ENCODE measurements at regions of chr15 and their contacts with region 1.

Region 1: DNA sequence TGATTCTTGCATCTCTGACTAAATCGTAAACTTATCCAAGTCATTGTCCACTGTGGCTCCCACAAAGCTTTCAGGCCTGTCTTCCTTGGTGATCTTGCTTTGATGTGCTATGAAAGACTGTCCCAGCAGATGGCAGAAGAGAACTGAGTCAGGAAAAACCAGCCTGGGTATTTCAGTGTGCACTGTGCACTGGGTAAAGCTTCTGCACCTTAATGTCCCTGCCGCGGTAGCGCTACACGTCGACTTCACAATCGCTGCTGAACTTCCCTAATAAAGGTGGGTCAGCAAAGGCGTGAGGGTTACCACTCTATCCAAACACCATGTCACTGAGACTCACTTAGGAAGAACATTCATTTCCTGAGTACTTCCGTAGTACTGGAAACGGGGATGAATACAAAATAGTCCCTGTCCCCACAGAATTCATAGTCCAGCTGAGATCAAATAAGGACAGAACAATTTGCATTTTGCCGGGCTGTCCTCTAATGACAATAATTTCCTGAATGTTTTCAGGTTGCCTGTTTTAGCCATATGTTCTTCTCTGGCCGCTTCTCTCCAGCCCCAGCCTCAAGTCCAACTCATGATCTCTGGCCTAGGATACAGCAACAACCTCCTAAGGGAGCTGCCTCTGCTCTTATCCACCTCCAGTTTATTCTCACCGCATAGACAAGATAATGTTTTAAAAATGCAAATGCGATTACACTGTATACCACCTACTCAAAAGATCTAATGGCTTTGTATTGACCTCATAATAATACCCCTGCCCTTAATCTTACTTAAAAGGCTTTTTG is 83.6 kb upstream of the AKAP13 start:
- DNase-seq: no peak
- H3K4me3 ChIP-seq: peak overlapping the region; percentile 35 to 52 (median 38)
- H3K27ac ChIP-seq: peak overlapping the region in 2 of 4 donors; percentile 33 to 66
- H3K4me1 ChIP-seq: peaks cover 5 to 14% (median 10%) of the 10 kb centered on the region in 4 donors
- H3K27me3 ChIP-seq: no peaks in the 10 kb centered on the region
- CTCF ChIP-seq: peak; percentile 70 to 81 (median 80)
- EP300 ChIP-seq: no peak
- POLR2A ChIP-seq: no peak

Region 2: DNA sequence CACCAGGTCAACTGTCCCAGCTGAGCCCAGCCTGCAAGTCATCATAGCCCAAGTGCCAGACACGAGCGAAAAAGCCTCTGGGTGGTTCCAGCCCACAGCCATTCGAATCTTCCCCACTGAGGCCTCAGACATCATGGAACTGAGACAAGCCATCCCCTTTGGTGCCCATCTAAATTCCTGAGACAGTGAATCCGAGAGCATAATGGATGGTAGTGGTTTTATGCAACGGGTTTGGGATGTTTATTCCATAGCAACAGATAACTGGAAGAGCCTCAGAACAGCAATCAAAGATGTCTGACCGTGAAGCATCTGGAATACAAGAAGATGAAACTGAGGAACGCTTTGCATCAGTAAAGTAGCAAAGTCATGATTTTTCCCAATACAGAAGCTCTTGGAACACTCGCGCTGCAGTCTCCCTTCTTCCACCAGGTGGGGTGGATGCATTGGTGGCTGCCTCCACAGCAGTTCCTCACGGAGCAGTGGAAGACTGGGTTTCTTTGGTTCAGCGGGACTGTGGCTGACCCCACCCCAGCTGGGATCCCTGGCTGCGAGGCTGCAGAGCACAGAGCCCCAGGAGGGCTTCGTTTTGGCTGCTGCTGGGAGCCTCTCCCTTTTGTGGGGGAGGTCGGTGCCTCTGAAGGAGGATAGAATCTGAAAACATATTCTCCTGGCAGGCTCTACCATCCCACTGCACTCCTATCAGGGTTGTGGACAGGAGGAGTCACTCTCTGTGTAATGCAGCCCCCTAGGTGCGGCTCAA is 341.5 kb before region 1 on chr15:
- intact Hi-C with region 1: no loop called
- DNase-seq: no peak
- H3K4me3 ChIP-seq: peak overlapping the region; percentile 33 to 50 (median 36)
- H3K27ac ChIP-seq: no peak overlapping the region
- H3K4me1 ChIP-seq: peaks cover 0 to 9% (median 9%) of the 10 kb centered on the region in 4 donors
- H3K27me3 ChIP-seq: no peaks in the 10 kb centered on the region
- CTCF ChIP-seq: peak; percentile 90 to 94 (median 92)
- EP300 ChIP-seq: no peak
- POLR2A ChIP-seq: no peak

Region 3: DNA sequence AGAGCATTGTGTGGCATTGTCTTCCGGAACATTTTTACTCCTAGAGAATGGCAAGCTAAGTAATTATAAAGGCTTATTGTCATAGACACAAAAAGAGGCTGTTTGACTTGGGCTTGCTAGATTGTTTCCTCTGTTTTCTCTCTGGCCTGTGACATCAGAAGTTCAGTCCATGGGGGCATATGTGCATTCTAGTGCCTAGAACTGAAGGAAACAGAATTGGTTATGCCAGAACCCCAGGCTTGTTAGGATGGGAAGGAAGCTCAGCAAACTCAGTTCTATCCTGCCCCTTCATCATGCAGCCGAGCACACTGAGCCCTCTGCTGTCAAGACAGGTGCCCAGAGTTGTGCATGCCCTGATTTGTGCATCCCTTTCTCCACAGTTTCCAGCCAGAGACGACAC is 183.8 kb before region 1 on chr15:
- intact Hi-C with region 1: no loop called
- DNase-seq: peak; percentile 21
- H3K4me3 ChIP-seq: no peak overlapping the region
- H3K27ac ChIP-seq: no peak overlapping the region
- H3K4me1 ChIP-seq: no peaks in the 10 kb centered on the region
- H3K27me3 ChIP-seq: no peaks in the 10 kb centered on the region
- CTCF ChIP-seq: no peak
- EP300 ChIP-seq: no peak
- POLR2A ChIP-seq: no peak

Region 4: DNA sequence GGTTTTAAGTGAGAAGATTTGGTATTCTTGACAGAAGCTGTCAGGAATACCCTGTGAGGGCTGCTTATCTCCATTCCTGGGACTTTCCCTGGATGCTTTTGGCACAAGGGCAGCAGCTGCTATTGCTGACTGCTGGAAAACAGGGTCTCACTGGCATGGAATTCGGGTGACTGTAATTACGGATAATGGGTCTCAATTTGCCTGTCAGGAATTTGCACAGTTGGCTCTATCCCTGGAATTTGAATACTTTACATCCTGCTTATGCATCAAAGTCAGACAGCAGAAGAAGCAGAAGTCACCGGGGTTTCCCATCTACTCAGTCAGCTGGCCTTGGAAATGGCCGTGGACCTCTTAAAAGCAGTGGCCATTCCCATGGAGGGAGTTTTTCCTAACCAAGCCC is 57.7 kb after region 1 on chr15:
- intact Hi-C with region 1: no loop called
- DNase-seq: no peak
- H3K4me3 ChIP-seq: no peak overlapping the region
- H3K27ac ChIP-seq: peak overlapping the region in 3 of 4 donors; percentile 13 to 36 (median 24)
- H3K4me1 ChIP-seq: peaks cover 27 to 38% (median 32%) of the 10 kb centered on the region in 4 donors
- H3K27me3 ChIP-seq: no peaks in the 10 kb centered on the region
- CTCF ChIP-seq: no peak
- EP300 ChIP-seq: no peak
- POLR2A ChIP-seq: no peak

Region 5: DNA sequence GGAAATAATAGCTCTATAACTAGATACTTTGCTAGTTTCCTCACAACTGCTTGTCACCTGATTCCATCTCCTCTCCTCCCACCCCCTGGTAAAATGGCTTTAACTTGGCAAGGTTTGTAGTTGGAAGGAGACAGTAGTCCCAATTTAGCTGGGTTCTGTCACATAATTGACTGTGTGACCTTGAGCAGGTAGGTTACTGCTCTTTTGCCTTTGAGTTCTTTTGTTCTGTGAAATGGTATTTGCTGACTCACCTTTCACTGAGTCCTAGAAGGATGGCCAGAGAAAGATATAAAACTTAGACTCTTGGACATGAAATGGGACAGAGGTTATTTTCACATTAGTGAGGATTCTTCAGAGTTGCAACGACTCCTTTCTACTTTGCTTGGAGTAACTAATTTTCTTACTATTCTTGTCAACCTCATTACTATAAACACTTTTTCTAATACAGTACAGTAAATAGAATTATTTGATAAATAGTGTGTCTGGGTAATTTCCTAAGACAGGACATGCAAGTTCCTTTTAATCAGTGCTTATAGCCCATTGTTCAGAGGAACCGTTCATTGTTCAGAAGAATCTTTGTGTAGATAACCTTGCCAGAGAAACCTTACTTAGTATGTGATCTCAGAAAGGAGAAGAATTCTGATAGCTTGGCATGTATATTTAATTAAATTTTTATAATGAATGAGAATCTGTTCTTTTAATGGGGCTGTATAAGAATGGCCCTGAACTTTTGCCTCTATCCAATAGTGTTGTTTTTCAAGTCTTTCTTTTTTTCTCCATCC is 97.9 kb after region 1 on chr15:
- intact Hi-C with region 1: no loop called
- DNase-seq: no peak
- H3K4me3 ChIP-seq: no peak overlapping the region
- H3K27ac ChIP-seq: peak overlapping the region; percentile 31 to 67 (median 46)
- H3K4me1 ChIP-seq: peaks cover 67 to 92% (median 81%) of the 10 kb centered on the region in 4 donors
- H3K27me3 ChIP-seq: no peaks in the 10 kb centered on the region
- CTCF ChIP-seq: no peak
- EP300 ChIP-seq: no peak
- POLR2A ChIP-seq: no peak

Region 6: GRCh38 chr15:85837011-85837433 is 540.2 kb after region 1 on chr15:
- intact Hi-C with region 1: loop called (anchors 5 kb)
- DNase-seq: no peak
- H3K4me3 ChIP-seq: no peak overlapping the region
- H3K27ac ChIP-seq: no peak overlapping the region
- H3K4me1 ChIP-seq: peaks cover 0 to 14% (median 12%) of the 10 kb centered on the region in 4 donors
- H3K27me3 ChIP-seq: no peaks in the 10 kb centered on the region
- CTCF ChIP-seq: no peak
- EP300 ChIP-seq: no peak
- POLR2A ChIP-seq: no peak